Heart right ventricle (tissue), 16 donors: ENCODE measurements at regions of chr10 and their contacts with region 1.

Region 1: DNA sequence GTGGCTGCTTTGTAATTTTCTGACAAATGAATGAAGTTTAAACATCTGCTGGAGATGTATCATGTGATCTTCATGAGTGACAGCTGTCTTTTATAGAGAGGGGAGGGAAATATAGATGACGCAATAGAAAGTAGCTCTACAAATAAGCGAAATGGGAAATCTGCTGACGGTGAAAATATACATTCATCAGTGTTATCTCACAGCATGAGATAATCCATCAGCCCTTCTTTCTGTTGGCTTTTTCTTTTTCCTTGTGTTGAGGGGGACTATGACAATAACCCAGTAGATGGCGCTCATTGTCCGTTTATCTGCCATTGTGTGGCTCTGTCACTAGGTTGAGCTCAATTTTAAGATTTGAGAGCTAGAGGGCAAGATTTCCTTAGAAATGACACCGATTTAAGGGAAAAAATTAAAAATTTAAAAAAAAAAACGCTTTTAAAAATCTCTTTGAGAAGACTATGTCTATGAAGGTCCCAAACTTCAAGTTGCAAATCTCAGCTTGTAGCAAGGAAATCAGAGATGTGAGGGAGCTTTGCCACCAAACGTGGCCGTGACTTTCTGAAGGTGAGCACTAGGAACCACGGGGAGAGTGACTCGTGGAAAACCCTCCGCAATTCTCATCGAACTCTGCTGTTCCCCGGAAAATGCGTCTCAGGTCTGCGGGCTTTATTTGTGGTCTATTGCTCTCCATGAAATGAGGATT is 114.6 kb upstream of the SFMBT2 start:
- DNase-seq: peak in 1 of 2 donors; percentile 81
- ATAC-seq: peak; percentile 73 to 91 (median 80)
- H3K4me3 ChIP-seq: no peak overlapping the region
- H3K27ac ChIP-seq: no peak overlapping the region
- H3K4me1 ChIP-seq: no peaks in the 10 kb centered on the region
- H3K27me3 ChIP-seq: peaks cover 0 to 42% (median 16%) of the 10 kb centered on the region in 7 donors
- CTCF ChIP-seq: peak; percentile 56 to 93 (median 84)

Region 2: GRCh38 chr10:7337431-7338171 is 187.9 kb before region 1 on chr10:
- intact Hi-C with region 1: no loop called
- DNase-seq: no peak
- ATAC-seq: peak in 2 of 8 donors; percentile 18 to 38
- H3K4me3 ChIP-seq: no peak overlapping the region
- H3K27ac ChIP-seq: peak overlapping the region in 6 of 10 donors; percentile 3 to 57 (median 32)
- H3K4me1 ChIP-seq: peaks cover 4 to 71% (median 47%) of the 10 kb centered on the region in 9 donors
- H3K27me3 ChIP-seq: no peaks in the 10 kb centered on the region
- CTCF ChIP-seq: no peak

Region 3: DNA sequence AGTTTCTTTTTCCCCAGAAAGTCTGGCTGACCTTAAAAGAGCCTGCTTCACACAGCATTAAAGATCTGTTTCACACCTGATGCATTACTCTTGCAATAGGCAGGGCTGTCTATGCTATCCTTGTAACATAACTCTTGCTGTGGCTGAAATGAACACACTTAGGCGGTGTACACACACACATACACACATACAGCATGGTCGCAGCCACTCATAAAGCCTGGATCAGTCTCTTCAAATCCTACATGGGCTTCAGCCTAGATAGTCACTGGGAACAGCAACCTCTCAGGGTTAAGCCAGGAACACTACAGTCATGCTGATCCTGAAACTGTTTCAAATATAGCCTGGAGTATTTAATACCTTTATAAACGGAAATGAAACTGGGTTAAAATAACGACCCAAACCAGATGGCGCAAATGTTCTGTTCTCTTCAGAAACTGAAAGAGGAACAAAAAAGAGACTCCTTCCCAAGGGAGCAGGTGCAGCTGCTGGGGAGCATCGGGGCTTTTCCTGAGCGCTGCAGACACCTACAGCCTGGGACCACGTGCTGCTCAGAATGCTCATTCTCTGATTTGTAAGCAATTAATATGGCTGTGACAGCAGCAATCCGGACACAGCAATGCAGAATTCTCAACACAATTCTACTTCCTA is 53.6 kb before region 1 on chr10:
- intact Hi-C with region 1: no loop called
- DNase-seq: no peak
- ATAC-seq: peak in 7 of 8 donors; percentile 23 to 61 (median 50)
- H3K4me3 ChIP-seq: peak overlapping the region in 1 of 10 donors; percentile 12
- H3K27ac ChIP-seq: peak overlapping the region in 1 of 10 donors; percentile 65
- H3K4me1 ChIP-seq: peaks cover 0 to 31% (median 11%) of the 10 kb centered on the region in 9 donors
- H3K27me3 ChIP-seq: peaks cover 0 to 5% (median 0%) of the 10 kb centered on the region in 7 donors
- CTCF ChIP-seq: no peak

Region 4: DNA sequence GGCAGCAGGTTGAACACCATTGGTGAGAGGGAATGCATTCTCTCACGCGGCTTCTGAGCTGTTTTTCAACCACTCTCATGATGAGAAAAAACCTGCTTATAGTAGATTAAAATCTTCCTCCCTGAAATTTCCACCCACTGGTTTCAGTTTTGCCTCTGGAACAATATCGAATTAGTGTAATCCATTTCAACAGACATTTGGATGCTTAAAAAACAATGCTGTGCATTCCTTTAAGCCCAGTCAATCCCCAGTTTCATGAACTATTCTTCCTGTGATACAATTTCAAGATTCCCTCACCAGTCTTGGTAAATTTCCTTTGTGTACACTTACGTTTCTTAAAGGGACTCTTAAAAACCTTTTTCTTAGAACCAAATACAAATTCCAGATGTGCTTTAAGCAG is 51.7 kb after region 1 on chr10:
- intact Hi-C with region 1: no loop called
- DNase-seq: no peak
- ATAC-seq: no peak
- H3K4me3 ChIP-seq: no peak overlapping the region
- H3K27ac ChIP-seq: no peak overlapping the region
- H3K4me1 ChIP-seq: peaks cover 0 to 5% (median 0%) of the 10 kb centered on the region in 9 donors
- H3K27me3 ChIP-seq: no peaks in the 10 kb centered on the region
- CTCF ChIP-seq: no peak

Region 5: GRCh38 chr10:7610651-7611389 is 85.4 kb after region 1 on chr10:
- intact Hi-C with region 1: loop called in 2 of 10 experiments (anchors 5 to 10 kb)
- DNase-seq: peak in 1 of 2 donors; percentile 22
- ATAC-seq: peak in 6 of 8 donors; percentile 24 to 88 (median 64)
- H3K4me3 ChIP-seq: no peak overlapping the region
- H3K27ac ChIP-seq: peak overlapping the region in 2 of 10 donors; percentile 7 to 45
- H3K4me1 ChIP-seq: peaks cover 0 to 20% (median 5%) of the 10 kb centered on the region in 9 donors
- H3K27me3 ChIP-seq: no peaks in the 10 kb centered on the region
- CTCF ChIP-seq: no peak

Region 6: GRCh38 chr10:7622969-7623368 is 97.5 kb after region 1 on chr10:
- intact Hi-C with region 1: loop called in 8 of 10 experiments (anchors 5 to 10 kb)
- DNase-seq: no peak
- ATAC-seq: peak in 5 of 8 donors; percentile 46 to 71 (median 50)
- H3K4me3 ChIP-seq: no peak overlapping the region
- H3K27ac ChIP-seq: no peak overlapping the region
- H3K4me1 ChIP-seq: peaks cover 4 to 30% (median 8%) of the 10 kb centered on the region in 9 donors
- H3K27me3 ChIP-seq: no peaks in the 10 kb centered on the region
- CTCF ChIP-seq: peak in 8 of 9 donors; percentile 14 to 59 (median 45)

Region 7: DNA sequence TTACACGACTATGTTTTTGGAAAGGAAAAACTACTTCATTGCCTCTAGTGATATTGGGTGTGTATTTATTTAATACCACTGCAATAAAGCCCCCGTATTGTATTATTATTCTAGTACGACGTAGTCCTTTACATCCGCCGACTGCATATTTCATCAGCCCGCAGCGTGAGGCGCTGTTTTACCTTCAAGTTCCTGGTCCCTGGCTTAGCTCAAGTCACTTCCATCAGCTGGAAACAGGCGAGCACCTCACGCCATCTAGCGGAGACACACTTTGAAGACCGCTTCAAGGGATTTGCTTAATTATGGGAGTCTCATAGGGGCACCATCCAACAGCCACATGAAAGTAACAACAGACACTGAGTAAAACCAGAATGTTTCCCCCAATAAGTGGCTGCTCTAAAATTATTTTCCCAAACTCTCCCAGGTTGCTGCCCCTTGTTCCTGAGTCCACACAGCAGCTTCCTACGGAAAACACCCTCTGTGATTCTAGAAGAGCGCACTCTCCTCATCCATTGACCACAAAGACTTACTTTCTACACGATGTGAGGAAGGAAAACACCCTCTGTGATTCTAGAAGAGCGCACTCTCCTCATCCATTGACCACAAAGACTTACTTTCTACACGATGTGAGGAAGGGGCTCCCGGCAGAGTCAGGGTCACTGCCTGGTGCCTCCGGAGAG is 161.9 kb after region 1 on chr10:
- intact Hi-C with region 1: loop called (anchors 1 to 2 kb)
- DNase-seq: peak; percentile 65 to 89
- ATAC-seq: peak; percentile 72 to 94 (median 92)
- H3K4me3 ChIP-seq: no peak overlapping the region
- H3K27ac ChIP-seq: no peak overlapping the region
- H3K4me1 ChIP-seq: peaks cover 0 to 3% (median 0%) of the 10 kb centered on the region in 9 donors
- H3K27me3 ChIP-seq: peaks cover 0 to 3% (median 0%) of the 10 kb centered on the region in 7 donors
- CTCF ChIP-seq: peak; percentile 77 to 97 (median 87)

Region 8: GRCh38 chr10:9209105-9209798 is 1683.8 kb after region 1 on chr10:
- intact Hi-C with region 1: loop called in 1 of 10 experiments (anchors 10 kb)
- DNase-seq: peak; percentile 39 to 44
- ATAC-seq: no peak
- H3K4me3 ChIP-seq: no peak overlapping the region
- H3K27ac ChIP-seq: no peak overlapping the region
- H3K4me1 ChIP-seq: no peaks in the 10 kb centered on the region
- H3K27me3 ChIP-seq: peaks cover 0 to 24% (median 4%) of the 10 kb centered on the region in 7 donors
- CTCF ChIP-seq: peak; percentile 72 to 94 (median 88)

Region 9: DNA sequence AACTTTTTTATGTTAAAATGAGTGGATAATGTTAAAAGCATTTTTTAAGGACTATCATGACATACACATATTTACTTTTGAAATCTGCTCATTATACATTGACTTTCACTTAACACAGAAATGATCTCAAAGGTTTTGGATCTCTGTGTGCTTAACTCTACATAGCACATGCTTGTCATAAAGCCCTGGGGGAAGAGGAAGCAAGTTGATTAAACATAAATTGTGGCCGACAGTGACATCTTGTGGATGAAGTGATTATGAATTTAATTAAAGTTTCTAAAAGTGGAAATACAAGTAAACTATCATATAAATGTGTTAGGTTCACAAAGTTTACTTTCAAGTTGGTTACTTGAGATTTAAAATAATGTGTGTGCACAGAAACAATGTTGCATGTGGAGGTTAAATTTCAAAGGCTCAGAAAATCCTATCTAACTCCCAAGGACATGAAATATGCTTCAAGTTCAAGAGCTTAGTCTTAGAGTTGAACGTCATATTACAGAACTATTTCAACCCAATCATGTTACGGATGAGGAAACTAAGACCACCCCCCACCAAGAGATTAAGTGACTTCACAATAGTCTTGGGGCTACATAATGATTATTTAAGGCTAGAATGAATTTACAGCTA is 1776.8 kb after region 1 on chr10:
- intact Hi-C with region 1: loop called in 8 of 10 experiments (anchors 5 to 10 kb)
- DNase-seq: peak in 1 of 2 donors; percentile 7
- ATAC-seq: no peak
- H3K4me3 ChIP-seq: no peak overlapping the region
- H3K27ac ChIP-seq: no peak overlapping the region
- H3K4me1 ChIP-seq: no peaks in the 10 kb centered on the region
- H3K27me3 ChIP-seq: peaks cover 0 to 22% (median 3%) of the 10 kb centered on the region in 7 donors
- CTCF ChIP-seq: peak in 8 of 9 donors; percentile 21 to 64 (median 46)